MCF 10A (cell line): ENCODE measurements at regions of chr7 and their contacts with region 1.

Region 1: GRCh38 chr7:5450549-5451372 is 27.1 kb upstream of the TNRC18 start:
- DNase-seq: peak; percentile 46
- H3K4me3 Mint-ChIP-seq: no peak overlapping the region
- H3K27ac Mint-ChIP-seq: no peak overlapping the region
- H3K4me1 Mint-ChIP-seq: peaks cover 7% of the 10 kb centered on the region
- H3K27me3 Mint-ChIP-seq: no peaks in the 10 kb centered on the region
- CTCF ChIP-seq: peak; percentile 56

Region 2: DNA sequence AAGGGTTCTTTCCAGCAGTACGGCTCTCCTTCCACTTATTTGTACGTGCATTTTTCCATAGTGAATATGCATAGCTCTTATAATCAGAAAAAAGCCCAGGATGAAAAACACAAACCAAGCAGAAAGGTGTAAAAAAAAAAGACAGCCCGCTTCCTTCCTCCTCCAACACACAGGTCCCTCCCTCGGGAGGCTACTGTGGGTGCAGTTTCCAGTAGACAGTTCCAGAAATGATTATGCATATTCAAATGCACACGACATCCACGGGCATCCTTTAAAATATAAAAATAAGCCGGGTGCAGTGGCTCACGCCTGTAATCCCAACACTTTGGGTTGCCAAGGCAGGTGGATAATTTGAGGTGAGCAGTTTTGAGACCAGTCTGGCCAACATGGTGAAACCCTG is 87.0 kb before region 1 on chr7:
- CTCF ChIA-PET with region 1: interaction called, 11 read pairs
- POLR2A ChIA-PET with region 1: no interaction called
- intact Hi-C with region 1: no loop called
- DNase-seq: no peak
- H3K4me3 Mint-ChIP-seq: no peak overlapping the region
- H3K27ac Mint-ChIP-seq: no peak overlapping the region
- H3K4me1 Mint-ChIP-seq: no peaks in the 10 kb centered on the region
- H3K27me3 Mint-ChIP-seq: no peaks in the 10 kb centered on the region
- CTCF ChIP-seq: no peak